ENCODE measurements at regions of chr20 and their contacts with region 1.

Region 1: DNA sequence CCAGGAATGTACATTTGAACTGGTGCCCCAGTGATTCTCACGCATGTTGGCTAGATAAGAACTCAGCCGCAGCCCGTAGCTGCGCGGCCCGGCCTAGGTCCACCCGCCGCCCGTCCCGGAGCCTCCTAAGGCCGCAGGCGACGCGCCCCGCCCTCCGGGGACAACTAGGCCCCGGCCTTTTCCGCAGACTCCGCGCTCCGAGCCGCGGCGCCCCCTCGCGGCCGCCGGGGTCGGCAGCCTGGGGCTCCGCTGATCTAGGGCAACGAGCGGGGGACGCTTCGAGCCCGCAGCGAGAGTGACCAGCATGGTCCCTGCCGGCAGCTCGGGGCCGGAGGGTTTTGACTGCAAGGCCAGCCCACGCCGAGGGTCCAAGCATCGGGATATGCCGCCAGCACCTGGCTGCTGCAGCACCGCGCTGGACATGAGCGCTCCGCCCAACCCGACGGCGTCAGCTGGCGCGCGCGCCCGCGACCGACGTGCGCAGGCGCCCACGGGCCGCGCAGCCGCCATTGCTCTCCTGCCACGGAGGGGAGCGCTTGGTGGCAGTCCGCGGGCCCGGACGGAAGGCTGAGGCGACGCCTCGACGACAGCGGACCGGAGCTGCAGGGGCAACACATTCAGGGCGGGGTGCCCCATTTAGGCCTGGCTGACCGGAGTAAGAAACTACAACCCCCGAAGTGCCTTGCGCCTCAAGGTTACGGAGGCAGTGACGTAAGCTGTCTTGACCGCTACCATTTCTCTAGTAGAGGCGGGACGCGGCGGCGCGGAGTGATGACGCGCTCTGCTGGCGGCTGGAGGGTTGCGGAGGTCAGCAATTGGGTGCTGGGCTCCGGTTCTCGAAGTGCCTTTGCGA is at the start of gene AP5S1:
- DNase-seq: peak; percentile 90
- H3K4me3 Mint-ChIP-seq: peak within 1 kb of the TSS; percentile 85
- H3K27ac Mint-ChIP-seq: peak within 1 kb of the TSS; percentile 89
- H3K4me1 Mint-ChIP-seq: peaks cover 42% of the 10 kb centered on the region
- H3K27me3 Mint-ChIP-seq: no peaks in the 10 kb centered on the region
- total RNA-seq, gene AP5S1: 14.9 and 15.0 TPM in 2 replicates

Region 2: DNA sequence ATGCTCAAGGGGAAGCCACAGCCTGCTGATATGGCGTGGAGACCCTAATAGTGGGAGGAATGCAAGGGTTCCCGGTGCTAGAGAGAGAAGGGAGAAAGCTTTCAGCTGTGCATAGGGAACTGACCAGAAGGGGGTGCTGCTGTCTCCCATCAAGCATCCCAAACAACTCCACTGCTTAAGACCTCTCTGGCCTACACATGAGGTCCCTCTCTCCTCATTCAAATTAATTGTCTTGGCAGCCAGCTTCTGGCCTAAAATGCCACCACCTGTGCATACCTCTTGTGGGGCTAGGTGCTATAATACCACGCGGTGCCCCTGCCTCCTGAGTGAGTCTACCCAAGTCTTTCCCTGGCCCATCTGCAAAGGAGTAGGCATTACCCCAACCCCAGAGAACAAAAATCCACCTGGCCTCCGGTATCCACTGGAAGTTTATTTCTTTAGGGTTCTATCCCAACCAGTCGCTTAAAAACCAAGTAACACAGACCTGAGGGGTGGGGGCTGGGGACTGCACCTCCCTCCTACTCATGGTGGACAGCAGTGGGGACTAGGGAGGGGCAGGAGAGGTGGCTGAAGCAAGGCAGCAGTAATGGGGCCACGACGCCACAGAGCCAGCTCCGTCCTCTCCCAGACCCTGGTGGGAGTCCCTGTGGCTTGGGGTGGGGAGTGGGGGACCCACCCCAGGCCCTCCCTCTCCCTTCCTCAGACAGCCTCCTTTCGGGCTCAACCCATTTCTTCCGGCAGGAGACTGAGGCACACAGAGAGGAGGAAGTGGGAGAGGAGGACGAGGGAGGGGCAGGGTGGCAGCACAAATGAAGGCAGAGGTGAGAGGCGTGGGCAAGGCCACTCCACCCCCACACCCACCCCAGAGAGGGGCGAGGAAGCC is 66.9 kb before region 1 on chr20:
- intact Hi-C with region 1: loop called (anchors 1 kb)
- DNase-seq: peak; percentile 51
- H3K4me3 Mint-ChIP-seq: no peak overlapping the region
- H3K27ac Mint-ChIP-seq: no peak overlapping the region
- H3K4me1 Mint-ChIP-seq: peaks cover 7% of the 10 kb centered on the region
- H3K27me3 Mint-ChIP-seq: no peaks in the 10 kb centered on the region

Region 3: GRCh38 chr20:3786665-3787323 is 33.5 kb before region 1 on chr20 and contains the start of gene CENPB:
- intact Hi-C with region 1: loop called (anchors 1 kb)
- DNase-seq: peak; percentile 88
- H3K4me3 Mint-ChIP-seq: peak within 1 kb of the TSS; percentile 86
- H3K27ac Mint-ChIP-seq: peak within 1 kb of the TSS; percentile 70
- H3K4me1 Mint-ChIP-seq: peaks cover 39% of the 10 kb centered on the region
- H3K27me3 Mint-ChIP-seq: no peaks in the 10 kb centered on the region
- total RNA-seq, gene CENPB: 72.3 and 80.2 TPM in 2 replicates

Region 4: DNA sequence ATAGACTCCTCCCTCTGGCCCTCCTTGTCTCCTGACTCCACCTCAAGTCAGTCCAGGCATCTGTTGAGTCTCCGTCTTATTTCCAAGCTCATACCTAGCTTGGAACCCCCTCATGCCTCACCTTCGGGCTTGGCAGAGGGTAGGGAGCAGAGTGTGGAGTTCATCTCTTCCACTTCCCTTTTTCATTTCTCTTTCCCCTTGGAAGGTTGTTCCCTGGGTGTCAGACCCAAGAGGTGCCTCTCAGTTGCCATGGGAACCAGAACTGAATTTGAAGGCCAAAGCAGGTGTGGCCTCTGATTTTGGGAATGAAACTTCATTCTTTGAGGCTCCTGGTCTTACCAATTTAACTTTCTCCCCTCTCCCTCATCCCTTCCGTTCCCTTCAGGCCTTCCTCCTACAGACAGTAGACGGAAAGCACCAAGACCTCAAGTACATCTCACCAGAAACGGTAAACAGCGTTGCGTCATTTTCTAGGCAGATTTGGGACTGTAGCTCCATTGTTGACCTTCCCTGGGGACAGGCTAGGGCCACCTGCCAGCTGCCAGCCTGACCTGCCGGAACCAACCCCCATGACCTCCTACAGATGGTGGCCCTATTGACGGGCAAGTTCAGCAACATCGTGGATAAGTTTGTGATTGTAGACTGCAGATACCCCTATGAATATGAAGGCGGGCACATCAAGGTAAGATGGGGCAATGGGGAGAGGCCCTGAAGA is 17.6 kb before region 1 on chr20:
- intact Hi-C with region 1: no loop called
- DNase-seq: no peak
- H3K4me3 Mint-ChIP-seq: no peak overlapping the region
- H3K27ac Mint-ChIP-seq: peak overlapping the region; percentile 46
- H3K4me1 Mint-ChIP-seq: peaks cover 67% of the 10 kb centered on the region
- H3K27me3 Mint-ChIP-seq: no peaks in the 10 kb centered on the region

Region 5: GRCh38 chr20:3846740-3847428 is 26.6 kb after region 1 on chr20 and contains the start of gene MAVS:
- intact Hi-C with region 1: loop called (anchors 1 kb)
- DNase-seq: peak; percentile 87
- H3K4me3 Mint-ChIP-seq: peak within 1 kb of the TSS; percentile 90
- H3K27ac Mint-ChIP-seq: peak within 1 kb of the TSS; percentile 81
- H3K4me1 Mint-ChIP-seq: peaks cover 22% of the 10 kb centered on the region
- H3K27me3 Mint-ChIP-seq: no peaks in the 10 kb centered on the region
- total RNA-seq, gene MAVS: 40.8 TPM in 2 replicates

Region 6: GRCh38 chr20:3911956-3912355 is 91.7 kb after region 1 on chr20:
- intact Hi-C with region 1: loop called (anchors 1 kb)
- DNase-seq: no peak
- H3K4me3 Mint-ChIP-seq: no peak overlapping the region
- H3K27ac Mint-ChIP-seq: no peak overlapping the region
- H3K4me1 Mint-ChIP-seq: peaks cover 56% of the 10 kb centered on the region
- H3K27me3 Mint-ChIP-seq: no peaks in the 10 kb centered on the region

Measured in activated T-helper 1 cell treated with anti-CD3 and anti-CD28 coated beads, Interleukin-12 subunit alpha, Interleukin-12 subunit beta, Interleukin-2, Interleukin-4 antibody, amounts not matched to agents 30 ng/mL and 10 ng/mL and 1 ng/mL, durations not matched to agents 14 hours and 24 hours and 36 hours (primary cell).